MCF 10A (cell line): ENCODE measurements at regions of chr2 and their contacts with region 1.

Region 1: DNA sequence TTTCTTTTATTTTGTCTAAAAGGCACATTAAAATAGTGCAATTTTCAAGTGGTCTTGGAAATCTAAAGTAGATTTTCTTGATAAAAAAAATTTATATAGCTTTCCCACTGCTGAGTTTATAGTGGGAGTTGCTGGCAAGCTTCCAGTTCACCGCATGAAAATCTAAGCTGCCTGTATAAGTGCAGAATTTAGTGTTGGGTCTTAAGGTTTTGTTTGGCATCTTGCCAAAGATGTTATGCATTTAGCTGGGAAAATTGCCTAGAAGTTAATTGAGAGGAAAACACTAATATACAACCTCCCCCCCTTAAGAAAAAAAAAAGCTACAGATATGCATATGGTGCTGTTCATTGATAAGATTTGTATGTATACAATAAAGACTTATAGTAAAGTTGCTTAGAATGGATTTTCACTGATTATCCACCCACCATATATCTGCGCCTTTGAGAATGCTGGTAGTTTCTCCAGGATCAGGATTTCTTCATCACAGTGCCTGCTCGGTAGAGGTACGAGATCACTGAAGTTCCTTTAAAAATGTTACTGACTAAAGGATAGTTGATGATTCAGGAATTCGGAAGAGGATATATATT is 803.2 kb upstream of the POU3F3 start:
- DNase-seq: no peak
- H3K4me3 Mint-ChIP-seq: no peak overlapping the region
- H3K27ac Mint-ChIP-seq: no peak overlapping the region
- H3K4me1 Mint-ChIP-seq: no peaks in the 10 kb centered on the region
- H3K27me3 Mint-ChIP-seq: peaks cover 91% of the 10 kb centered on the region
- CTCF ChIP-seq: no peak

Region 2: GRCh38 chr2:103898561-103898960 is 152.2 kb before region 1 on chr2:
- CTCF ChIA-PET with region 1: no interaction called
- POLR2A ChIA-PET with region 1: no interaction called
- intact Hi-C with region 1: no loop called
- DNase-seq: no peak
- H3K4me3 Mint-ChIP-seq: no peak overlapping the region
- H3K27ac Mint-ChIP-seq: no peak overlapping the region
- H3K4me1 Mint-ChIP-seq: no peaks in the 10 kb centered on the region
- H3K27me3 Mint-ChIP-seq: peaks cover 19% of the 10 kb centered on the region
- CTCF ChIP-seq: no peak

Region 3: GRCh38 chr2:104312686-104313085 is 261.9 kb after region 1 on chr2:
- CTCF ChIA-PET with region 1: no interaction called
- POLR2A ChIA-PET with region 1: no interaction called
- intact Hi-C with region 1: loop called (anchors 10 kb)
- DNase-seq: no peak
- H3K4me3 Mint-ChIP-seq: no peak overlapping the region
- H3K27ac Mint-ChIP-seq: no peak overlapping the region
- H3K4me1 Mint-ChIP-seq: no peaks in the 10 kb centered on the region
- H3K27me3 Mint-ChIP-seq: peaks cover 77% of the 10 kb centered on the region
- CTCF ChIP-seq: no peak

Region 4: GRCh38 chr2:104368089-104368488 is 317.3 kb after region 1 on chr2:
- CTCF ChIA-PET with region 1: no interaction called
- POLR2A ChIA-PET with region 1: no interaction called
- intact Hi-C with region 1: no loop called
- DNase-seq: no peak
- H3K4me3 Mint-ChIP-seq: no peak overlapping the region
- H3K27ac Mint-ChIP-seq: no peak overlapping the region
- H3K4me1 Mint-ChIP-seq: no peaks in the 10 kb centered on the region
- H3K27me3 Mint-ChIP-seq: peaks cover 80% of the 10 kb centered on the region
- CTCF ChIP-seq: no peak